CD8-positive, alpha-beta T cell (primary cell): ENCODE measurements at regions of chr3 and their contacts with region 1.

Region 1: GRCh38 chr3:52238761-52239701 is at the start of gene TWF2:
- DNase-seq: peak; percentile 67 to 95 (median 88)
- ATAC-seq: peak; percentile 83
- H3K4me3 ChIP-seq: peak within 1 kb of the TSS; percentile 79 to 95
- H3K4me3 Mint-ChIP-seq: peak within 1 kb of the TSS; percentile 98
- H3K27ac ChIP-seq: peak within 1 kb of the TSS; percentile 85 to 95
- H3K27ac Mint-ChIP-seq: peak within 1 kb of the TSS; percentile 98
- H3K4me1 ChIP-seq: peaks cover 77% of the 10 kb centered on the region
- H3K4me1 Mint-ChIP-seq: peaks cover 76% of the 10 kb centered on the region
- H3K27me3 ChIP-seq: no peaks in the 10 kb centered on the region
- H3K27me3 Mint-ChIP-seq: no peaks in the 10 kb centered on the region
- CTCF ChIP-seq: peak; percentile 58
- total RNA-seq, gene TWF2: 31.1 to 31.2 TPM

Region 2: GRCh38 chr3:52225452-52226228 is 13.4 kb before region 1 on chr3 and contains the start of gene TLR9:
- CTCF ChIA-PET with region 1: interaction called, 79 read pairs
- POLR2A ChIA-PET with region 1: interaction called, 29 read pairs
- intact Hi-C with region 1: loop called in 1 of 2 experiments (anchors 2 kb)
- DNase-seq: peak in 3 of 9 experiments; percentile 30 to 53 (median 52)
- ATAC-seq: peak; percentile 45
- H3K4me3 ChIP-seq: peak within 1 kb of the TSS in 1 of 2 experiments; percentile 14
- H3K4me3 Mint-ChIP-seq: peak within 1 kb of the TSS; percentile 58
- H3K27ac ChIP-seq: peak within 1 kb of the TSS; percentile 24 to 49
- H3K27ac Mint-ChIP-seq: peak within 1 kb of the TSS; percentile 80
- H3K4me1 ChIP-seq: peaks cover 66% of the 10 kb centered on the region
- H3K4me1 Mint-ChIP-seq: peaks cover 68% of the 10 kb centered on the region
- H3K27me3 ChIP-seq: no peaks in the 10 kb centered on the region
- H3K27me3 Mint-ChIP-seq: no peaks in the 10 kb centered on the region
- CTCF ChIP-seq: no peak
- total RNA-seq, gene TLR9: 0.33 TPM in 1 of 2 experiments, not detected in the other

Region 3: DNA sequence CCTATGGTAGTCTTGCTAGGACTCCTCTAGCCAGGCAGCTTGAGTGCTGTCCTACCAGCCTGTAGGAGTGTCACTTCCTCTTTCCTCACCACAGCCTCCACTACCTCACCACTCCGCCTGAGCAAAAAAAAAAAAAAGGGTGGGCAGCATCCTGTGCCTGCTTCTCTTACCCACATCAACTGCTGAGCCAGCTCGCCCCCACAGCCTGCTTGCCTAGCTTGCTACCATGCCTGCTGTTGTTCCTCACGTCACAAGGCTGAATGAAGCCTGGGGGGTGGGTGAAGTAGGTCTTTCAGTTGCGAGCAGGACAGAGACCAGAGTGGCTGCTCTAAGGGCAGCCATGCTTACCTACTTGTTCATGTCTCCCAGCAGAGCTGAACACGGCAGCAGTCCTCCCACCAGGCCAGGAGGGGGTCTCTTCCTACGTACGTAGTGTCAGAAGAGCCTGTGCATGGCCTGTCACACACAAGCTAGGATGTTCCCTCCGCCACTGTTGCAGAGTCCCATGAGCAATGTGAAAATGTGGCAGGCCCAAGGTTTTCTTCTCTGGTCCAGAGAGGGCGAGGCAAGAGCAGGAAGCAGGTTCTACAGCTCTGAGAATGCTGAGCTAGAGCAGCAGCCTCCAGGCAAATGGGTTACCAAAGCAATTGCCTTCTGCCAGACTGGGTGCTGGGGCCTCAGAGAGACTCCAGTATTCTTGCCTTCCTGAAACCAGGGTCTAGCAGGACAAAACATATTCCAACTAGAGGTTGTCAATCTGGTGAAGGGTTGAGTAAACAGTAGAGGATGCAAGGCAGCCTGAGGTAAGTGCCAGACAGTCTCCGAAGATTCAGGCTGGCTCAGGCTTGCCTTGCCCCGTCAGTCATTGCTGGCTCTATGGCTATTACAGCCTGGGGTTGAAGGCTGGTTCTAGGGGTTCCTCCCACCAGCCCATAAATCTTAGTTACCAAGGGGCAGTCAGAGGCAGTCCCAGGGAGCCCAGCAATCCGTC is 14.6 kb after region 1 on chr3:
- CTCF ChIA-PET with region 1: interaction called, 34 read pairs
- POLR2A ChIA-PET with region 1: interaction called, 160 read pairs
- intact Hi-C with region 1: loop called (anchors 1 kb)
- DNase-seq: peak; percentile 70 to 97 (median 87)
- ATAC-seq: peak; percentile 86
- H3K4me3 ChIP-seq: peak overlapping the region; percentile 25 to 32
- H3K4me3 Mint-ChIP-seq: peak overlapping the region; percentile 84
- H3K27ac ChIP-seq: peak overlapping the region; percentile 76 to 92
- H3K27ac Mint-ChIP-seq: peak overlapping the region; percentile 100
- H3K4me1 ChIP-seq: peaks cover 96% of the 10 kb centered on the region
- H3K4me1 Mint-ChIP-seq: peaks cover 93% of the 10 kb centered on the region
- H3K27me3 ChIP-seq: no peaks in the 10 kb centered on the region
- H3K27me3 Mint-ChIP-seq: no peaks in the 10 kb centered on the region
- CTCF ChIP-seq: no peak

Region 4: GRCh38 chr3:52270252-52270754 is 31.3 kb after region 1 on chr3:
- CTCF ChIA-PET with region 1: interaction called, 622 read pairs
- POLR2A ChIA-PET with region 1: interaction called, 685 read pairs
- intact Hi-C with region 1: loop called in 1 of 2 experiments (anchors 2 kb)
- DNase-seq: no peak
- ATAC-seq: no peak
- H3K4me3 ChIP-seq: peak overlapping the region in 1 of 2 experiments; percentile 10
- H3K4me3 Mint-ChIP-seq: peak overlapping the region; percentile 82
- H3K27ac ChIP-seq: peak overlapping the region; percentile 34 to 68
- H3K27ac Mint-ChIP-seq: peak overlapping the region; percentile 95
- H3K4me1 ChIP-seq: peaks cover 73% of the 10 kb centered on the region
- H3K4me1 Mint-ChIP-seq: peaks cover 86% of the 10 kb centered on the region
- H3K27me3 ChIP-seq: no peaks in the 10 kb centered on the region
- H3K27me3 Mint-ChIP-seq: no peaks in the 10 kb centered on the region
- CTCF ChIP-seq: no peak

Region 5: GRCh38 chr3:52278510-52279069 is 39.6 kb after region 1 on chr3 and contains the start of gene WDR82:
- CTCF ChIA-PET with region 1: interaction called, 622 read pairs
- POLR2A ChIA-PET with region 1: interaction called, 685 read pairs
- intact Hi-C with region 1: loop called (anchors 1 kb)
- DNase-seq: peak; percentile 94 to 99 (median 98)
- ATAC-seq: peak; percentile 77
- H3K4me3 ChIP-seq: peak within 1 kb of the TSS; percentile 65 to 95
- H3K4me3 Mint-ChIP-seq: peak within 1 kb of the TSS; percentile 94
- H3K27ac ChIP-seq: peak within 1 kb of the TSS; percentile 79 to 93
- H3K27ac Mint-ChIP-seq: peak within 1 kb of the TSS; percentile 99
- H3K4me1 ChIP-seq: peaks cover 49% of the 10 kb centered on the region
- H3K4me1 Mint-ChIP-seq: peaks cover 72% of the 10 kb centered on the region
- H3K27me3 ChIP-seq: no peaks in the 10 kb centered on the region
- H3K27me3 Mint-ChIP-seq: no peaks in the 10 kb centered on the region
- CTCF ChIP-seq: peak; percentile 36
- total RNA-seq, gene WDR82: 115 to 117 TPM

Region 6: DNA sequence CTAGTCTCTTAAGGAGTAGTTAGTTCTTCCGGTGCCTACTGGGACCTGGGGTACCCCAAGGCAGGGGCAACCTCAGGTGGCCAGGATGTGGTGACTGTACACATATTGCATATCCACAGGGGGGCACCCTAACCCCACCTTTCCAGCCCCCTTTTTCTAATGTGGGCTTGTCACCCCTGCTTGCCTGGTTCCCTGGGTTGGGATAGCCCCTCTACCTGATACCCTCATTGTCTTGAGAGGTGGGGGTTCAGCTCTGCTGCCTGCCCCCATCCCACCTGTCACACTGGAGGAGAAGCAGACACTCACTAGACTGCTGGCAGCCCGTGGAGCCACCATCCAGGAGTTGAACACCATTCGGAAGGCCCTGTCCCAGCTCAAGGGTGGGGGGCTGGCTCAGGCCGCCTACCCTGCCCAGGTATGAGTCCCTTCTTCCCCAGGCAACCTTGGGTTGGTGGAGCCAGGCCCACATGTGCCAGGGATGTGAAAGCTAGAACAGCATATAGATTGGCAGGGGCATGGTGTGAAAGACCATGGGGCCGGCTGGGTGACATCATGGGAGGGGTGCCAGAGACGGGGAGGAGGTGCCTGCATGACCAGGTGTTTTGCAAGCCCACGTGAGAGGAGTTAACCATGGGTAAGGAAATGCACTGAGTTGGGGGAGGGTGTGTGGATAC is 52.6 kb after region 1 on chr3:
- CTCF ChIA-PET with region 1: interaction called, 622 read pairs
- POLR2A ChIA-PET with region 1: interaction called, 685 read pairs
- intact Hi-C with region 1: loop called (anchors 1 to 2 kb)
- DNase-seq: peak in 7 of 9 experiments; percentile 33 to 70 (median 60)
- ATAC-seq: peak; percentile 32
- H3K4me3 ChIP-seq: no peak overlapping the region
- H3K4me3 Mint-ChIP-seq: peak overlapping the region; percentile 37
- H3K27ac ChIP-seq: no peak overlapping the region
- H3K27ac Mint-ChIP-seq: no peak overlapping the region
- H3K4me1 ChIP-seq: peaks cover 33% of the 10 kb centered on the region
- H3K4me1 Mint-ChIP-seq: peaks cover 37% of the 10 kb centered on the region
- H3K27me3 ChIP-seq: no peaks in the 10 kb centered on the region
- H3K27me3 Mint-ChIP-seq: no peaks in the 10 kb centered on the region
- CTCF ChIP-seq: peak; percentile 49

Region 7: DNA sequence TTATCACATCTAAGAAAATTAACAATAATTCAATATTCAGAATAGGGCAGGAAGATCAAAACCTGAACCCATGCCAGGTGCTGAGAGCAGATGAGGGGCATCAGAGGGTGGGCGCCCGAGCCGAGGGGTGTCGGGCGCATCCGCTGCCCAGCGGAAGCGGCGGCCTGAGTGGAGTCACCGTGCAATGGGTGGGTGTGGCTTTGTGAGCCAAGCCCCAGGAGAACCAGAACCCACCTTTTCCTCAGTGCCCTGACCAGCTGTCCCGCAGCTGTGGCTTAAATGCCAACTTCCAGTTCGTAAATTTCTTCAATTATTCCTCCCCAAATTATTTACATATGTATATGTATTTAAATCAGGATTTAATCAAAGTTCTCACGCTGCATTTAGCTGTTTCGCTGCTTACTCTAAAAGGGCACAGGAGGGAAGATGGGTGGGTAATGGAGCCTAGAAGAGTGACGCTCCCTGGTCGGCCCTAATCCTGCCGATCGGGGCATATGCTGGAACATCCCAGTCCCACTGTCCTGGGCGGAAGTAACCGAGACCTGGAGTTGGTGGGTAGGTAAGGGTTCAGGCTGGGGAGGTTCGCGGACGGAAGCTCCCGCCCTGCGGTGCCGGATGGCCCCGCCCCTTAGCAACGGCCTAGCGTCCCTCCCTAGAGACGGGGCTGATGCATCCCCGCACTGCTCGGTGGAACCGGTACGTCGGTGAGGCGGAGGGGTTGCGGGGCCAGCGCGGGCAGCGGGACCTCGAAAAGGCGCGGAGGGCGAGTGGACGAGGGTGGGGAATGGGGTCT is 78.4 kb after region 1 on chr3:
- CTCF ChIA-PET with region 1: no interaction called
- POLR2A ChIA-PET with region 1: no interaction called
- intact Hi-C with region 1: loop called in 1 of 2 experiments (anchors 2 kb)
- DNase-seq: peak; percentile 48 to 84 (median 73)
- ATAC-seq: peak; percentile 100
- H3K4me3 ChIP-seq: peak overlapping the region; percentile 36 to 59
- H3K4me3 Mint-ChIP-seq: peak overlapping the region; percentile 69
- H3K27ac ChIP-seq: no peak overlapping the region
- H3K27ac Mint-ChIP-seq: no peak overlapping the region
- H3K4me1 ChIP-seq: peaks cover 12% of the 10 kb centered on the region
- H3K4me1 Mint-ChIP-seq: peaks cover 11% of the 10 kb centered on the region
- H3K27me3 ChIP-seq: no peaks in the 10 kb centered on the region
- H3K27me3 Mint-ChIP-seq: no peaks in the 10 kb centered on the region
- CTCF ChIP-seq: no peak